Esophagus muscularis mucosa (tissue), 4 donors: ENCODE measurements at regions of chr10 and their contacts with region 1.

Region 1: GRCh38 chr10:74826142-74827044 is at the start of gene KAT6B:
- DNase-seq: peak; percentile 100
- H3K4me3 ChIP-seq: peak within 1 kb of the TSS; percentile 81 to 94 (median 88)
- H3K27ac ChIP-seq: peak within 1 kb of the TSS; percentile 97 to 99 (median 98)
- H3K4me1 ChIP-seq: peaks cover 44 to 73% (median 66%) of the 10 kb centered on the region in 4 donors
- H3K27me3 ChIP-seq: no peaks in the 10 kb centered on the region
- CTCF ChIP-seq: peak; percentile 3 to 24 (median 17)
- EP300 ChIP-seq: no peak
- POLR2A ChIP-seq: no peak
- total RNA-seq, gene KAT6B: 50.0 to 75.8 (median 57.5) TPM

Region 2: GRCh38 chr10:74262856-74263255 is 563.5 kb before region 1 on chr10:
- intact Hi-C with region 1: loop called (anchors 10 kb)
- DNase-seq: no peak
- H3K4me3 ChIP-seq: no peak overlapping the region
- H3K27ac ChIP-seq: no peak overlapping the region
- H3K4me1 ChIP-seq: peaks cover 0 to 14% (median 3%) of the 10 kb centered on the region in 4 donors
- H3K27me3 ChIP-seq: no peaks in the 10 kb centered on the region
- CTCF ChIP-seq: no peak
- EP300 ChIP-seq: no peak
- POLR2A ChIP-seq: no peak

Region 3: DNA sequence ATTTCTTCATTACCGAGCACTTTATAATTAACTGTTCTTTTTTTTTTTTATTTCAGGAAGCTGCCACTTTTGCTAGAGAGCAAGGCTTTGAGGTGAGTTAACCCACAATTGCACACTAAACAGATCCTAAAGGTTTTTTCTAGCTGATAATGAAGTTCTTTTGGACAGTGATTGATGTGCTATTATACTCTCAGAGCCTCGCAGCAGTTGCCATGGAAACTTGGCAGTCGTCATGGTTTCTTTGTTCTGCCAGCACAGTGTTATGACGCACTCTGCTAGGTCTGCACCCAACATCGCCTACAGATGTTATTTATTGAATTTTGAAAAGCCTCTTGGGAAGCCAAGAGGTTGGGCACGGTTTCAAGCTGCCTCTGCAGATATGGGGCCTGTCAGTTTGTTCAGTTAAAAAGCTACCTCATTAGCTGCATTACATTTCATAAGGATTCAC is 237.1 kb before region 1 on chr10:
- intact Hi-C with region 1: loop called (anchors 10 kb)
- DNase-seq: peak; percentile 97
- H3K4me3 ChIP-seq: no peak overlapping the region
- H3K27ac ChIP-seq: peak overlapping the region; percentile 57 to 76 (median 67)
- H3K4me1 ChIP-seq: peaks cover 73 to 94% (median 93%) of the 10 kb centered on the region in 4 donors
- H3K27me3 ChIP-seq: no peaks in the 10 kb centered on the region
- CTCF ChIP-seq: no peak
- EP300 ChIP-seq: peak; percentile 16
- POLR2A ChIP-seq: no peak

Region 4: DNA sequence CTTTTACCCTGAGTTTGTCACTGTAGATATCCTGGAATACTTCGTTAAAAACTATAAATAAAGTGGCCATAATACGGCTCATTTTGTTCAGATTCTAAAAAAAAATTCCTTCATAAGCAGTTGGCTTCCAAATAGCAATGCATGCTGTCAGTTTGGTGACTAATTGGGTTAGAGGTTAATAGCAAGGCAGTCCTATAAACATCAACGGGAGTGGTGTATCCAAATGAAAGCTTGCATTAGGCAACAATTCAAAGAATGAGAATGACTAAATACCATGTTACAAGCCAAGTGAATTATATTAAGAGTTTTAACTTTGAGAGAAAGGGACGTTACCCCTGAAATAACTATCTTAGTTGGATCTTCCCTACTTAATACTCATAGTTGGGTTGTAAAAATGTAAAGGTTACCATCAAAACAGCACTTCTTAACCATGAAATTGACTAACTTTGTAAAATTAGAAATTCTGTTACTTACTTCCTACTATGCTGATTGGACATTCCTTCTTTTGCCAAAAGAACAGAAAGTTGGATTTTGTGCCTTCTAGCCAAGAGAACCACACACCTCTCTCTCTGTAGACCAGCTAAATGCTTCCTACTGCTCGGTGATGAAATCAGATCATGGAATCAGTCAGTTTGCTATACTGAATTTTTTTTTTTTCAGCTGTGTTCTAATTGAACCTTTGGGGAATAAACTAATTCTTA is 98.0 kb after region 1 on chr10:
- intact Hi-C with region 1: loop called (anchors 5 kb)
- DNase-seq: no peak
- H3K4me3 ChIP-seq: peak overlapping the region; percentile 10 to 26 (median 18)
- H3K27ac ChIP-seq: peak overlapping the region; percentile 79 to 87 (median 86)
- H3K4me1 ChIP-seq: peaks cover 65 to 83% (median 82%) of the 10 kb centered on the region in 4 donors
- H3K27me3 ChIP-seq: no peaks in the 10 kb centered on the region
- CTCF ChIP-seq: no peak
- EP300 ChIP-seq: no peak
- POLR2A ChIP-seq: no peak

Region 5: GRCh38 chr10:75019370-75019769 is 193.0 kb after region 1 on chr10:
- intact Hi-C with region 1: loop called (anchors 5 kb)
- DNase-seq: no peak
- H3K4me3 ChIP-seq: no peak overlapping the region
- H3K27ac ChIP-seq: no peak overlapping the region
- H3K4me1 ChIP-seq: peaks cover 20 to 61% (median 52%) of the 10 kb centered on the region in 4 donors
- H3K27me3 ChIP-seq: no peaks in the 10 kb centered on the region
- CTCF ChIP-seq: peak; percentile 23 to 48 (median 44)
- EP300 ChIP-seq: no peak
- POLR2A ChIP-seq: no peak

Region 6: DNA sequence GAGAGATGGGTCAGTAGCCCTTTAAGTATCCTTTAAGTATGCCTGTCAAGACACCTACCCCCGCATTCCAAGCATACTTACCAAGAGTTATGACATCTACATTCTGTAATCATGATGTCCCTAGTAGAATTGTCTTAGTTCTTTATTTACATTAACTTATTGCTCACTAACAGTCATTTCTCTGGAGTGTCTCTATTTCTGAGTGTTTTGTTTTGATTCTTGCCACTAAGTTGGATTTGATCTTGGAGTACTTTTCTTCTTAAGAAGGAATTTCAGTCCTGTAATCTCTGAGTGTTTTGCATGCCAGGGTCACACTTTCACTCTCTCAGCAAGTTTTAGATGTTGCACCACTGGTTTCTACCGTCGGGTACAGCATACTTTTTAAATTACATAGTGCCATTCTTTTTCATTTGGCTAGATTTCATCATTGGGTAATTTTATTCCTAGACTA is 1757.3 kb after region 1 on chr10:
- intact Hi-C with region 1: no loop called
- DNase-seq: no peak
- H3K4me3 ChIP-seq: no peak overlapping the region
- H3K27ac ChIP-seq: peak overlapping the region; percentile 2 to 39 (median 22)
- H3K4me1 ChIP-seq: peaks cover 0 to 34% (median 23%) of the 10 kb centered on the region in 4 donors
- H3K27me3 ChIP-seq: no peaks in the 10 kb centered on the region
- CTCF ChIP-seq: no peak
- EP300 ChIP-seq: no peak
- POLR2A ChIP-seq: no peak